ENCODE measurements at regions of chr5 and their contacts with region 1.

Region 1: DNA sequence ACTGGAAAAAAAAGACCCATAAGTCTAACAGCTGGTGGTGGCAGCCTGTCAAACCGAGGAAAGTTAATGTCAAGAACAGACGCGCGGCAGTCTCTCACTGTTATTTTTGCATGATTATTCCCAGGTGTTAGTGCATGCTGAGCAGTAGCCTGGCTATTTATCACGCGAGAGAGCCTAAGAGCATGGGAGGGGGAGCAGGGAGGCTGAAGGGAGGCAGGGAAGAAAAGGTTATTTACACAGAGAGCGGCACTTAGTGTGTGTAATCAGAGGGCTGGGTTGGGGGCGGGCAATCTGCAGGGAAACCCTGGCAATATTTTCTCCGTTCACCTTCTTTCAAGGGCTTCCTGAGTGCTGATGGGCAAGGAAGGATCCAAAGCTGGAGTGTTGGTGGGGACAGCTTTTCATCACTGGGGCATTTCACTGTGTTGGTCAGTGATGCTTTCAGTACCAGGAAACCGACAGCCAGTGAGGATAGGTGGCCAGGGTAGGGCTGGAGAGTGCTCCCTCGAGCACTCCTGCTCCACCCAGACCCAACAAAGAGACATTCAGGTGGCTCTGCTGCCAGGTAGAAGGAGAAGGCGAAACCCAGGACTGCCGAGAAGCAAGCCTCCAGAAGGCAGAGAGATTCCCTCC is 39.6 kb downstream of the ZNF608 start:
- DNase-seq: no peak
- ATAC-seq: no peak
- H3K4me3 ChIP-seq: peak overlapping the region; percentile 16; the same call in 1 of the 2 replicates
- H3K27ac ChIP-seq: peak overlapping the region; percentile 78
- H3K4me1 ChIP-seq: peaks cover 61% of the 10 kb centered on the region
- H3K27me3 ChIP-seq: no peaks in the 10 kb centered on the region
- CTCF ChIP-seq: no peak
- EP300 ChIP-seq: no peak
- POLR2A ChIP-seq: no peak
- RAD21 ChIP-seq: no peak

Region 2: GRCh38 chr5:124605541-124605940 is 101.3 kb before region 1 on chr5:
- CTCF ChIA-PET with region 1: no interaction called
- POLR2A ChIA-PET with region 1: no interaction called
- RAD21 ChIA-PET with region 1: no interaction called
- SMC1A ChIA-PET with region 1: no interaction called
- in situ Hi-C with region 1: no loop called
- intact Hi-C with region 1: no loop called
- DNase-seq: no peak
- ATAC-seq: no peak
- H3K4me3 ChIP-seq: no peak overlapping the region
- H3K27ac ChIP-seq: no peak overlapping the region
- H3K4me1 ChIP-seq: no peaks in the 10 kb centered on the region
- H3K27me3 ChIP-seq: no peaks in the 10 kb centered on the region; a peak in 1 of 4 replicates
- CTCF ChIP-seq: no peak
- EP300 ChIP-seq: no peak
- POLR2A ChIP-seq: no peak
- RAD21 ChIP-seq: no peak

Region 3: GRCh38 chr5:124661317-124662141 is 45.3 kb before region 1 on chr5:
- CTCF ChIA-PET with region 1: no interaction called
- POLR2A ChIA-PET with region 1: interaction called, 3 read pairs
- RAD21 ChIA-PET with region 1: interaction called, 3 read pairs
- SMC1A ChIA-PET with region 1: interaction called, 10 read pairs
- in situ Hi-C with region 1: no loop called
- intact Hi-C with region 1: no loop called
- DNase-seq: no peak
- ATAC-seq: peak; percentile 75
- H3K4me3 ChIP-seq: no peak overlapping the region
- H3K27ac ChIP-seq: no peak overlapping the region
- H3K4me1 ChIP-seq: peaks cover 8% of the 10 kb centered on the region; the same call in 1 of the 2 replicates
- H3K27me3 ChIP-seq: no peaks in the 10 kb centered on the region
- CTCF ChIP-seq: no peak
- EP300 ChIP-seq: peak in 1 of 2 experiments; percentile 8; a peak in 1 of 4 replicates
- POLR2A ChIP-seq: no peak
- RAD21 ChIP-seq: no peak

Region 4: DNA sequence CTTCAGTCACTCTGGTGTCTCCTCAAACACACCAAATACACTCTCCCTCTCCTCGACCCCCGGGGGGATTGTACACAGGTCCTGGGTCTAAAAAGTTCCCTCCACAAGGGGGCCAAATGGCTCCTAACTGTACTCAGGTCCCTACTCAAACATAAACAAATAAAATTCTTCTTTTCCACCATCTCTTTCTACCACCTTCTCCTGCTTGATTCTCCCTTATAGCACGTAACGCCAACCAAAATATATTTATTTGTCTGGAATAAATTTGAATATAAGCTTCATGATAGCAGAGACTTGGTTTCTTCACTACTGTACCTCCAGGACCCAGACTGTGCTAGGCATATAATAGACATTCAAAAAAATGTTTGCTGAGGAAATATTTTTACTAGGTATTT is 18.2 kb after region 1 on chr5:
- CTCF ChIA-PET with region 1: interaction called, 13 read pairs
- POLR2A ChIA-PET with region 1: interaction called, 3 read pairs
- RAD21 ChIA-PET with region 1: interaction called, 10 read pairs
- SMC1A ChIA-PET with region 1: interaction called, 42 read pairs
- in situ Hi-C with region 1: no loop called
- intact Hi-C with region 1: no loop called
- DNase-seq: no peak
- ATAC-seq: peak; percentile 78
- H3K4me3 ChIP-seq: peak overlapping the region; percentile 46; the same call in 1 of the 2 replicates
- H3K27ac ChIP-seq: peak overlapping the region; percentile 73
- H3K4me1 ChIP-seq: peaks cover 12% of the 10 kb centered on the region
- H3K27me3 ChIP-seq: no peaks in the 10 kb centered on the region
- CTCF ChIP-seq: peak; percentile 32 to 44 (median 33); a peak in 5 of 6 replicates
- EP300 ChIP-seq: no peak
- POLR2A ChIP-seq: no peak
- RAD21 ChIP-seq: peak; percentile 43

Region 5: DNA sequence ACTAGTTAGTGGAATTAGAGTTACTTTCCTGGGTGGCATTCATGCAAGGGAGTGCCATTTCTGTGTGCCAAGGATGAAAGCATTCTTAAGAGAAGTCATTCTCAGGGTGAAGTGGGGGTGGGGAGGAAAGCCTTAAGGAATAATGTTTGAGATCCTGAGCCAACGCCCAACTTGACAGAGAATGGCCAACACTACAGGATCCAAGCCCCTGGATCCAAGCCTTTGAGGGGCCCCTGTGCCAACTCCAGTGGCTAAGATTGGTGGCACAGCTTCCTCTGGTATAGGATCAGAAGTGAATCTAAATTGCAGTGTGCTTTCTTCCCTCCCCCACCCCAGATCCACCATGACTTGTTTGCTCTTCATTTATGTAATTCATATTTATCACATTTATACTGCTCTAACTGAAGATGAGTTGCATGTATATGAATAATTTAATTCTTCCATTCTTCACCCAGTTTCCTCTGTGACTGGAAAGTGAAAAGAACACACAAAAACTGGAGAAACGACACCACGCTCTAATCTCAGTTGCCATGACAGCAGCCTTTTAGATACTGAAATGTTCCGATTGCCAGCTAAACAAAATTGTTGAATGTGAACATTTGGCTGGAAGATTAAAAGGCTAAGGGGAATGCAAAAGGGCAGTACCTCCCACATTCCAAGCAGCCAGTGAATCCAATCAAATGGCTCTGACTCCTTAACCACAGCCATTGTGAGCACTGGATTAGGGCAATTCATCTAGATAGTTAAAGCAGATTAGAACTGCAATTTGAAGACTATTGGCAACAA is 35.1 kb after region 1 on chr5:
- CTCF ChIA-PET with region 1: no interaction called
- POLR2A ChIA-PET with region 1: interaction called, 6 read pairs
- RAD21 ChIA-PET with region 1: interaction called, 42 read pairs
- SMC1A ChIA-PET with region 1: interaction called, 27 read pairs
- in situ Hi-C with region 1: no loop called
- intact Hi-C with region 1: no loop called
- DNase-seq: no peak
- ATAC-seq: no peak
- H3K4me3 ChIP-seq: peak overlapping the region; percentile 71
- H3K27ac ChIP-seq: peak overlapping the region; percentile 67
- H3K4me1 ChIP-seq: peaks cover 3% of the 10 kb centered on the region
- H3K27me3 ChIP-seq: 0 out of 4 replicates have a peak, but pooled peaks cover 0 to 4% of the 10 kb centered on the region in 2 experiments
- CTCF ChIP-seq: no peak
- EP300 ChIP-seq: no peak
- POLR2A ChIP-seq: no peak
- RAD21 ChIP-seq: no peak

Region 6: GRCh38 chr5:124773315-124774311 is 66.8 kb after region 1 on chr5:
- CTCF ChIA-PET with region 1: no interaction called
- POLR2A ChIA-PET with region 1: no interaction called
- RAD21 ChIA-PET with region 1: no interaction called
- SMC1A ChIA-PET with region 1: no interaction called
- in situ Hi-C with region 1: no loop called
- intact Hi-C with region 1: no loop called
- DNase-seq: no peak
- ATAC-seq: no peak
- H3K4me3 ChIP-seq: no peak overlapping the region
- H3K27ac ChIP-seq: no peak overlapping the region
- H3K4me1 ChIP-seq: no peaks in the 10 kb centered on the region
- H3K27me3 ChIP-seq: no peaks in the 10 kb centered on the region
- CTCF ChIP-seq: no peak
- EP300 ChIP-seq: no peak
- POLR2A ChIP-seq: no peak
- RAD21 ChIP-seq: no peak